HCT116 (cell line): ENCODE measurements at regions of chr9 and their contacts with region 1.

Region 1: GRCh38 chr9:107044872-107045271 is 181.9 kb downstream of the ZNF462 start:
- DNase-seq: no peak
- ATAC-seq: peak; percentile 80
- H3K4me3 ChIP-seq: no peak overlapping the region
- H3K27ac ChIP-seq: no peak overlapping the region
- H3K4me1 ChIP-seq: no peaks in the 10 kb centered on the region
- H3K27me3 ChIP-seq: no peaks in the 10 kb centered on the region
- CTCF ChIP-seq: peak; percentile 13 to 66 (median 50); a peak in 4 of 6 replicates
- POLR2A ChIP-seq: no peak
- RAD21 ChIP-seq: peak; percentile 51

Region 2: DNA sequence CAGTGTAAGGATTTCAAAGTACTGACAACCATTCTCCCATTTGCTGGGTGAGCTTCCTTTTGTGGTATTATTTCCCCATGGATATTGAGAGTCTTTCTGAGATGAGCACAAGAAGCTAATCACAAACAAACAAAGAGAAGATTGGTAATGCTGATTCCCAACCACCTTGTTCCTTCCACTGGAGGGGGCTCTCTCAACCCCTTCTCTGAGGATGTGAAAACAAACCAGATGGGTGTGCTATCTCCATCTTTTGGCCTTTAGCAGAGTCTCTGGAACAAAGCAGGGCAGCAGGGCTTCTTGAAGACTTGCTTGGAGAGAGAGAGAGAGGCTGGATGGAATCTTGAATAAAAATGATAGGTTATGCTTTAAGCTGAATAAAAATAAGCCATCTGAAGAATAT is 758.6 kb before region 1 on chr9:
- CTCF ChIA-PET with region 1: no interaction called
- POLR2A ChIA-PET with region 1: no interaction called
- RAD21 ChIA-PET with region 1: no interaction called
- intact Hi-C with region 1: loop called (anchors 10 kb)
- DNase-seq: no peak
- ATAC-seq: peak; percentile 62
- H3K4me3 ChIP-seq: no peak overlapping the region
- H3K27ac ChIP-seq: no peak overlapping the region
- H3K4me1 ChIP-seq: no peaks in the 10 kb centered on the region
- H3K27me3 ChIP-seq: no peaks in the 10 kb centered on the region; the same call in 1 of the 2 replicates
- CTCF ChIP-seq: peak; percentile 44 to 73 (median 46)
- POLR2A ChIP-seq: no peak
- RAD21 ChIP-seq: peak; percentile 52; the same call in 1 of the 2 replicates

Region 3: DNA sequence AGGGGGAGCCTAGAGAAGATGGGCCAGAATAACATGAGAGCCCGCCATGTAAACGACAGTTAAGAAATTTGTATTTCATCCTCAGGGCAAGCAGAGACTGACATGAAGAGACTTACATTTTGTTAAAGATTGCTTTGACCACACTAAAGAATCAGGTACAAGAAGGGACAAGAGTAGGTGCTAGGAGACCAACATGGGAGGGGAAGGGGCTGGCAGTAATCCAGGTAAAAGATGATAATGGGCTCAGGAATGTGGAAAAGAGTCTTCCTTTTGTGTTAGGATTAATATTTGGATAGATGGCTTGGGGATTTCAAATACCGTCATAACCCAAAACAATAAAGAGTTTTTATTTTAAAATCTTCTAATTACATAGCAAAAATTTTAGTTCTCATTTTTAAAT is 44.7 kb before region 1 on chr9:
- CTCF ChIA-PET with region 1: no interaction called
- POLR2A ChIA-PET with region 1: no interaction called
- RAD21 ChIA-PET with region 1: no interaction called
- intact Hi-C with region 1: no loop called
- DNase-seq: no peak
- ATAC-seq: no peak
- H3K4me3 ChIP-seq: no peak overlapping the region
- H3K27ac ChIP-seq: no peak overlapping the region
- H3K4me1 ChIP-seq: no peaks in the 10 kb centered on the region
- H3K27me3 ChIP-seq: no peaks in the 10 kb centered on the region
- CTCF ChIP-seq: no peak
- POLR2A ChIP-seq: no peak
- RAD21 ChIP-seq: no peak

Region 4: DNA sequence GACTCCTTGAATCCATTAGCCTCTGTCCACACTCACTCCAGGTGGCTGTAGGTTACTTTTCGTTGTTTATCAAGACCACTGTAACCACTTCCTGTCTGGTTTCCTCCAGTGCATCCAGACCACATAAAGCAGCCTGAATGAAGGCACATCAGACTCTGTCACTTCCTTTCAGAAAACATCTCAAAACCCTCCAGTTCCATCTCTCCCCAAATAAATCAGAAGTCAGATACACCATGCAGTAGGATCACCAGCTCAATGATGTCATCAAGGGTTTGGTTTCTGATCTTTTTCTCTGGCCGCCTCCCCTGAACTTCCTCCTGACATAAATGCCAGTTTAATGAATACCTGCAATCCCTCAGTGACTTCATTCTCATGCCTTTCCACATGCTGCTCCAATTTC is 20.7 kb before region 1 on chr9:
- CTCF ChIA-PET with region 1: no interaction called
- POLR2A ChIA-PET with region 1: no interaction called
- RAD21 ChIA-PET with region 1: no interaction called
- intact Hi-C with region 1: no loop called
- DNase-seq: no peak
- ATAC-seq: no peak
- H3K4me3 ChIP-seq: no peak overlapping the region
- H3K27ac ChIP-seq: no peak overlapping the region
- H3K4me1 ChIP-seq: no peaks in the 10 kb centered on the region
- H3K27me3 ChIP-seq: no peaks in the 10 kb centered on the region
- CTCF ChIP-seq: no peak
- POLR2A ChIP-seq: no peak
- RAD21 ChIP-seq: no peak